ENCODE measurements at regions of chr12 and their contacts with region 1.

Region 1: DNA sequence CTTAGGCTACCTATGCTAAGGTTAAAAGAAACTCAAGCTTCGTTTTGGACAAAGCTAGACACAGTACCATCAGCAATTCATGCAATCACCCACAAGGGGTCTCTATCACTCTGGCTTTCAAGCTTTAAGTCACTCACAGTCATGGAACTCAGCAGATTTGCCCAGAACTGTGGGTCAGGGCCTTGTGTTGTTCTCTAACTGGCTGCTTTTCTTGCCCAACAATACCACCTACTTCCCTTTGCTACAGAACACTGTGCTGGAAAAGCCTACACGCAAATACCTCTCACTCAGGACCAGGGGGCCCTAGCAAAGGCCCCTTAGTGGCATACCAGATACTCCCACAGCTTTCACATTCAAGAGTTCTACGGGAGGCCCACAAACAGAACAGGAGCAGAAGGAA is 9.1 kb downstream of the NEMP1 start:
- DNase-seq: peak; percentile 85
- ATAC-seq: peak; percentile 100
- H3K4me3 ChIP-seq: no peak overlapping the region
- H3K4me3 Mint-ChIP-seq: no peak overlapping the region
- H3K27ac ChIP-seq: peak overlapping the region; percentile 30 to 53
- H3K27ac Mint-ChIP-seq: peak overlapping the region; percentile 82
- H3K4me1 ChIP-seq: peaks cover 12 to 23% of the 10 kb centered on the region in 2 donors
- H3K4me1 Mint-ChIP-seq: peaks cover 32% of the 10 kb centered on the region
- H3K27me3 ChIP-seq: no peaks in the 10 kb centered on the region
- H3K27me3 Mint-ChIP-seq: no peaks in the 10 kb centered on the region
- CTCF ChIP-seq: peak; percentile 85

Region 2: DNA sequence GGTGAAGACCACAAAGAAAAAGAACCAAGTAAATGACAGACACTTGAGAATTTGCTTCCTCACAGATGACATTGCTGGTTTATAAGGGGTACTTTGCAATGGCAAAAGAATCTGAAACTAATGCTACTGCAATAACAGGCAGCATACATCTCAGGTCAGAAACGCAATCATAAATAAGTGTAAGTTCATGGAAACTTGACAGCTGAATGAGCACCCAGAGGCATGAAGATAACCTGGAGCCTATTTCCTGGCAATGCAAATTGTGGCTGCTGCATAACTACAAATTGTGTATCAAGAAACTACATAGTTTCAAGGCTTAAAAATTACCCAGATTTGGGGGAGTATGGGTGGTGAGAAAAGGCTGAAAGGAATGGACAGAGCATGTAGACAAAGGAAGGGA is 11.1 kb before region 1 on chr12:
- CTCF ChIA-PET with region 1: interaction called, 17 read pairs
- POLR2A ChIA-PET with region 1: interaction called, 3 read pairs
- intact Hi-C with region 1: no loop called
- DNase-seq: peak; percentile 35
- ATAC-seq: peak; percentile 66
- H3K4me3 ChIP-seq: peak overlapping the region in 1 of 5 experiments; percentile 13
- H3K4me3 Mint-ChIP-seq: peak overlapping the region; percentile 70
- H3K27ac ChIP-seq: peak overlapping the region; percentile 22 to 60
- H3K27ac Mint-ChIP-seq: peak overlapping the region; percentile 77
- H3K4me1 ChIP-seq: peaks cover 30 to 47% of the 10 kb centered on the region in 2 donors
- H3K4me1 Mint-ChIP-seq: peaks cover 57% of the 10 kb centered on the region
- H3K27me3 ChIP-seq: no peaks in the 10 kb centered on the region
- H3K27me3 Mint-ChIP-seq: no peaks in the 10 kb centered on the region
- CTCF ChIP-seq: no peak

Region 3: GRCh38 chr12:57118711-57119271 is 49.3 kb after region 1 on chr12:
- CTCF ChIA-PET with region 1: interaction called, 420 read pairs
- POLR2A ChIA-PET with region 1: no interaction called
- intact Hi-C with region 1: no loop called
- DNase-seq: peak; percentile 54
- ATAC-seq: no peak
- H3K4me3 ChIP-seq: no peak overlapping the region
- H3K4me3 Mint-ChIP-seq: no peak overlapping the region
- H3K27ac ChIP-seq: peak overlapping the region in 1 of 2 donors; percentile 21
- H3K27ac Mint-ChIP-seq: no peak overlapping the region
- H3K4me1 ChIP-seq: peaks cover 12% of the 10 kb centered on the region in 2 donors
- H3K4me1 Mint-ChIP-seq: peaks cover 5% of the 10 kb centered on the region
- H3K27me3 ChIP-seq: no peaks in the 10 kb centered on the region
- H3K27me3 Mint-ChIP-seq: no peaks in the 10 kb centered on the region
- CTCF ChIP-seq: no peak

Region 4: DNA sequence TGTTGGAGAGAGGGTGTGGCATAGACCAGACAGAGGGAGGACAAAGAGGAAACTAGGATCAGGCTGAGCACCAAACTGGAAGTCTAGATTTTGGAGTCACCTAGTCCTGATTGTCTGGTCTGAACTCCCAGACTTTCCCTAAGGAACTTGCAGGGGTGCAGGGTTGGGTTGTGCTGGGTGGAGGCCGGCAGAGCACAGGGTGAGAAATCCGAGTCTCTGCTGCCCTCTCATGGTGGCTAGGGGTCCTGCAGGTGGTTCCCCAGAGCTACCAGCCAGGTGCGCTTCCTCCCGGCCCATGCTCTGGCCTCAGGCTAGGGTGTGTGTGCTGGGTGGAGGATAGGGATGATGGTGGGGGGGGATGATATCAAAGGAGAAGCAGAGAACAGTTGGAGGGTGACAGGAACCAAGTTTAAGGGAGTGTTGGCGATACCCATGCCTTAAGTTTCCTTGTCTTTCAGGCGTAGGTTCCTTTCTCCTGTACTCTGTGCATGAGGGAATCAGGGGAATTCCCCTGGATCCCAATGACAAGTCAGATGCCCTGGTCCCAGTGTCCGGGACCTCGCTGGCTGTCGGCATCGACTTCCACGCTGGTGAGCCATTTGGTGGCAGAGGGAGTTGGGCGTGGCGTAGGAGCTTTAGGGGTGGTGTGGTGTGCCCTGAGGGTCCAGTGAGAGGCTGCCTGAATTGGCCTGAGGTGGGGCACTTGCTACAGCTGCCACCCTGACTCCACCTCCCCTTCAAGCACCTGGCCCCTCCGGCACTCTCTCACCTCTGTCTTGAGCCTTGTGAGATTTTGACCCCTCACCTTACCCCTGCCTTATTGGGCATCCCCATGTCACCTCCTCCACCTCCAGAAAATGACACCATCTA is 113.6 kb after region 1 on chr12:
- CTCF ChIA-PET with region 1: interaction called, 12 read pairs
- POLR2A ChIA-PET with region 1: interaction called, 5 read pairs
- intact Hi-C with region 1: loop called (anchors 1 kb)
- DNase-seq: peak; percentile 86
- ATAC-seq: peak; percentile 99
- H3K4me3 ChIP-seq: no peak overlapping the region
- H3K4me3 Mint-ChIP-seq: no peak overlapping the region
- H3K27ac ChIP-seq: no peak overlapping the region
- H3K27ac Mint-ChIP-seq: peak overlapping the region; percentile 1
- H3K4me1 ChIP-seq: peaks cover 0 to 6% of the 10 kb centered on the region in 2 donors
- H3K4me1 Mint-ChIP-seq: peaks cover 5% of the 10 kb centered on the region
- H3K27me3 ChIP-seq: no peaks in the 10 kb centered on the region
- H3K27me3 Mint-ChIP-seq: peaks cover 2% of the 10 kb centered on the region
- CTCF ChIP-seq: peak; percentile 88